ENCODE measurements at regions of chr7 and their contacts with region 1.

Region 1: DNA sequence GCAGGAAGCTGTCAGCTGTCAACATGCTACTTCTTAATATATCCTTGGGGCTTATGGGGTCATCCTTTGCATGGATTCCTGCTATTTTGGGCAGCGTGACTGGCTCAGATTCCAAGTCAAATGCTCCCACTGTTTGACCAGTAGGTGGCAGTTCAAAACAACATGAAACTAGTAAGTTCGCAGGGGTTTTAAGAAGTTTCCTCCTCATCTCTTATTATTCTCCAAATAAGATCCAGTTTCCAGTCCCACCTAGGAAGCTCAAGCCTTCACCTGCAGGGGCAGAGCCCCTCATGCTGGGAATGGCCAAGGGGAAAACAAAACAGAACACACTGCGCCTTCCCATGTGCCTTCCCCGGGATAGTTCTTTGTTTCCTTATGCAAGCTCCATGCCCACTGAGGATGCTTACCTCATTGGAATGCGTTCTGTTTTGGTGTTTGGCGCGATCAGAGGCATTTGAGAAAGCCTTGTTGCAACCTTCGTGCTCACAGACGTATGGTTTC is 259.8 kb downstream of the GLI3 start:
- DNase-seq: no peak
- H3K4me3 ChIP-seq: no peak overlapping the region
- H3K27me3 ChIP-seq: no peaks in the 10 kb centered on the region
- CTCF ChIP-seq: peak; percentile 81

Region 2: GRCh38 chr7:41955893-41956675 is 21.1 kb before region 1 on chr7:
- CTCF ChIA-PET with region 1: interaction called, 21 read pairs
- POLR2A ChIA-PET with region 1: no interaction called
- DNase-seq: peak; percentile 98
- H3K4me3 ChIP-seq: no peak overlapping the region
- H3K27me3 ChIP-seq: no peaks in the 10 kb centered on the region
- CTCF ChIP-seq: no peak

Region 3: DNA sequence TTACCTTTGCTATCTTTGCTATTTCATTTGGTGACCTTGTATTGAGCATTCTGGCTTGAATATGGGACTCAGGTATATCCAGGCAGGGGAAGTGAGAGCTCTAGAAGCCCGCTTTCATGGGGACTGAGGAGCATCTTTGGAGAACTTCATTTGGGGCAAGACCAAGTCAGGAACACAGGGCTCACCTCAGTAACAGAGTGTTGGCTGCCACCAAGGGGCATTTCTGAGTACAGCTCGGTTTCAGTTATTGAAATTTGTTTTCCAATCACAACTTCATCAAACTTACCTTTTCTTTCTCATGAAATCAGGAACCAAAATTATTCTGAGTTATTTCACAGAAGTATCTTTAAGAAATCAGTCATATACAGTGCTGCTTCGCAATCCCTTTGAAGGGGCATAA is 597.5 kb after region 1 on chr7:
- CTCF ChIA-PET with region 1: interaction called, 10 read pairs
- POLR2A ChIA-PET with region 1: no interaction called
- DNase-seq: no peak
- H3K4me3 ChIP-seq: no peak overlapping the region
- H3K27me3 ChIP-seq: peaks cover 5% of the 10 kb centered on the region
- CTCF ChIP-seq: no peak

Region 4: GRCh38 chr7:42690794-42691639 is 713.8 kb after region 1 on chr7:
- CTCF ChIA-PET with region 1: interaction called, 25 read pairs
- POLR2A ChIA-PET with region 1: no interaction called
- DNase-seq: no peak
- H3K4me3 ChIP-seq: no peak overlapping the region
- H3K27me3 ChIP-seq: peaks cover 5% of the 10 kb centered on the region
- CTCF ChIP-seq: peak; percentile 61

Region 5: DNA sequence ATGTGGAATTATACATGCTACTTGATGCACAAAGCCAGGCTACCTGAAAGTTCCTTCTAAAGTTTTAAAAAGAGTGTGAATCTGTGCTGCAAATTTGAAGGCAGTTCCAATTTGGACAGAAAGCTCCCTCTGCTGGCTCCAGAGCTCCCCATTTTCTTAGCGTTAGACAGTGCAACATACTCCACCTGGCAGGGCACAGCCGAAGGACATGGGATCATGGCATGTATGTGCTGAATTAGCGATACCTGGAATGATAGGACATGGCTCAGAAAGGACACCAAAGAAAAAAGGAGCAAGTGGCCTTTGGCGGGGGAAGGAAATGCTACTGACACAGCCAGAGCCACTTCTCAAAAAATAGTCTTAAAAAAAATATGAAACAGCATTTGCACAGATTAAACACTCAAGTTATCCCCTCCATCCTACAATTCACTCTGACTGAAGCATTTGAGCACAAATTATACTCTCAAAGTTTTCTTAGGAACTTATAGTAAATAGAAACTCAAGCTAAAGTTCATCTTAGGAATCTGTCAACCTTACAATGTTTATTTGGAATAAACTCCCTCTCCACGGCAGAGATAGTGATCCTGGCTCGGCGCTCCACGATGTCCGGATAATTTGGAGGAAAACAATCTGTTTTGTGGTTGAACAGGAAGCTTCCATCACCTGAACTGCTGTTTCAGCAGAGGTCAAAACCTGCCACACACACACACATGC is 854.7 kb after region 1 on chr7:
- CTCF ChIA-PET with region 1: interaction called, 12 read pairs
- POLR2A ChIA-PET with region 1: no interaction called
- DNase-seq: no peak
- H3K4me3 ChIP-seq: no peak overlapping the region
- H3K27me3 ChIP-seq: peaks cover 2% of the 10 kb centered on the region
- CTCF ChIP-seq: peak; percentile 76

Region 6: DNA sequence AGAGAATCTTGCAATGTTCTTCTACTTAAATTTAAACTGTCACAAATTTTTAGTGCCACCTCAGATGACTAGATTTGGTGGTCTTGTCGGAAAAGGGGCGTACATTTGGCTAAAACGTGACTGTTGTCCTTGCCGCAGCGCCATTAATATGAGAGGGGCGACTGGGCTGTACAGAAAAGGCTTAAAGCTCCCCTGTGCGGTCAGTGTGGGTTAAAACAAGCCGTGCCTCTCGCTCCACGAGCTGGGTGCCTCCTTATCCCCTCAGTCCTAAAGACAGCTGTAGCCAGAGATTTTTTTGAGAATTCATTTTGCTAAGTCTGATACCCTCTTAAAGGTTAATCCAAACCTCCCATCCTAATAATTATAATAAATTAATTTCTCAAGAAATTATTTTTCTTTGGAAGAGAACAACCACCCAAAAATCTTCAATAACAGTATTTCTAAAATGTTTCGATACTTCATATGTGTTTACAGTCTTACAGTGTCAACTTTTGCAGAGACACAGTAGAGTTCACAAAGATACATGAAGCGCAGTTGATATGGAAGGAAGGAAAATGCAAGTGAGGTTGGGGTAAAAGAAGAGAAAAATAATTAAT is 866.1 kb after region 1 on chr7:
- CTCF ChIA-PET with region 1: interaction called, 11 read pairs
- POLR2A ChIA-PET with region 1: no interaction called
- DNase-seq: no peak
- H3K4me3 ChIP-seq: no peak overlapping the region
- H3K27me3 ChIP-seq: peaks cover 5% of the 10 kb centered on the region
- CTCF ChIP-seq: peak; percentile 61

Region 7: DNA sequence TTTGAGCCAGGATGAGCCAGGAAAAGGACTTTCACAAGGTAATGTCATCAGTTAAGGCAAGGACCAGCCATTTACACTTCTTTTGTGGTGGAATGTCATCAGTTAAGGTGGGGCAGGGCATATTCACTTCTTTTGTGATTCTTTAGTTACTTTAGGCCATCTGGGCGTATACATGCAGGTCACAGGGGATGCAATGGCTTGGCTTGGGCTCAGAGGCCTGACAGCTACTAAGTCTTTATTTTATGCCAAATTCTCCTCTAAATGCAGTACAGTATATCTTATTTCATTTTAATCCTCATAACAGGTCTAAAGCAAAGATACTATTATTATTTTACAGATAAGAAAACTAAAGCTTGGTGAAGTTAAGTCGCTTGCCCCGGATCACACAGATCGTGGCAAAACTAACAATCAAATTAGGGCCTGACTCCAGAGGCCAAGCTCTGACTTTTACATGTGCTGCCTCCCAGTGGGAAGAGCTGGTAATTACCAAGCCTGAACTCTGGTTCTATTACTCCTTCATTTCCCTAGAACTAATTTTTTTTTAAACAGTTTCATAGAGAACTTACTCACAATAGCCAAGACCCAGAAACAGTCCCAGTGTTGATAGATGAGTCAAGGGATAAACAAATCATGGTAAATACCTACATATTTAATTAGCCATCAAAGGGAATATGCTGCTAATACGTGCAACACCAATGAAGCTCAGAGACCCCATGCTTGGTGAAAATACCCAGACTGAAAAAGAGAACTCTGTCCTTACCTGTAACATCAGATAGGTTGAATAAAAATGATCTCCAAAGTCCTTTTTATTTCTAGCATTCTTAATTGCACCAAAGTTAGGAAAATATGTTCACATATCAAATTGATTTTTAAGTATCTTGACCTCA is 899.2 kb after region 1 on chr7:
- CTCF ChIA-PET with region 1: interaction called, 15 read pairs
- POLR2A ChIA-PET with region 1: no interaction called
- DNase-seq: no peak
- H3K4me3 ChIP-seq: no peak overlapping the region
- H3K27me3 ChIP-seq: no peaks in the 10 kb centered on the region
- CTCF ChIP-seq: peak; percentile 82

Measured in BJ (cell line).